ENCODE measurements at regions of chr19 and their contacts with region 1.

Region 1: GRCh38 chr19:13150187-13150930 is at the starts of genes IER2 and STX10:
- DNase-seq: peak; percentile 82 to 94
- ATAC-seq: peak; percentile 59 to 67
- H3K4me3 ChIP-seq: peak within 1 kb of the TSS; percentile 95
- H3K27ac ChIP-seq: peak within 1 kb of the TSS; percentile 99 to 100
- H3K4me1 ChIP-seq: peaks cover 8% of the 10 kb centered on the region; the same call in 1 of the 3 replicates
- CTCF ChIP-seq: peak; percentile 32
- EP300 ChIP-seq: no peak
- POLR2A ChIP-seq: peak; percentile 35
- RAD21 ChIP-seq: peak in 1 of 2 experiments; percentile 31; a peak in 2 of 5 replicates
- polyA plus RNA-seq, gene IER2: 52.5 and 75.7 TPM in 2 replicates
- polyA plus RNA-seq, gene STX10: 39.1 and 41.5 TPM in 2 replicates

Region 2: DNA sequence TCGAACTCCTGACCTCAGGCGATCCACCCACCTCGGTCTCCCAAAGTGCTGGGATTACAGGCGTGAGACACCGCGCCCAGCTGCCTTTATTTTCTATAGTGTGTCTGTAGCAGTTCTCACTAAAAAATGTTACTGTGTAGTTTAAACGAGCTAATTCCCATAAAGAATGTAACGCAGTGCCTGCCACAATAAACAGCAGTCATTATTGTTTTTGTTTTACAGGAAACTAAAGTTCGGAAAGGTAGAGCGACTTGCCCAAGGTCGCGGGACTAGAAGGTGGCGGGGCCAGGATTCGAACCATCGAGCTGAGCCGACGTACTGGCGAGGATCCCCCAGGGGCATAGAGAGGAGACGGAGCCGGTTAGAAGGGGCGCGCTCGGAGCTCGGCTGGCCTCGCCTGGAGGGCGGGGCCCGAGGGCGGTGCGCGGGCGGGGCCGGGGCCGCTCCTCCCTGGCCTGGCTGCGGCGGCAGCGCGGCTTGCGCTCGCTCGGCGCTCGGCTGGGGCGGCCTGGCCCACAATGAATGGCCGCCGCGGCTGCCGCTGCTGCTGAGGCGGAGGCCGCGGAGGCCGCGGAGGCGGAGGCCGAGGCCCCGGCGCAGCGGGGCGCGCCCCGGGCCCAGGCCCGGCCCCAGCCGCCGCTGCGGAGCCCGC is 32.5 kb before region 1 on chr19 and contains the start of gene NACC1:
- CTCF ChIA-PET with region 1: interaction called, 10 read pairs
- POLR2A ChIA-PET with region 1: interaction called, 12 read pairs
- DNase-seq: peak; percentile 86 to 87
- ATAC-seq: peak; percentile 88 to 90
- H3K4me3 ChIP-seq: peak within 1 kb of the TSS; percentile 100
- H3K27ac ChIP-seq: peak within 1 kb of the TSS; percentile 98 to 99
- H3K4me1 ChIP-seq: peaks cover 25% of the 10 kb centered on the region
- CTCF ChIP-seq: no peak
- EP300 ChIP-seq: no peak
- POLR2A ChIP-seq: no peak; the same call in 1 of the 2 replicates
- RAD21 ChIP-seq: no peak
- polyA plus RNA-seq, gene NACC1: 26.1 and 30.0 TPM in 2 replicates

Region 3: DNA sequence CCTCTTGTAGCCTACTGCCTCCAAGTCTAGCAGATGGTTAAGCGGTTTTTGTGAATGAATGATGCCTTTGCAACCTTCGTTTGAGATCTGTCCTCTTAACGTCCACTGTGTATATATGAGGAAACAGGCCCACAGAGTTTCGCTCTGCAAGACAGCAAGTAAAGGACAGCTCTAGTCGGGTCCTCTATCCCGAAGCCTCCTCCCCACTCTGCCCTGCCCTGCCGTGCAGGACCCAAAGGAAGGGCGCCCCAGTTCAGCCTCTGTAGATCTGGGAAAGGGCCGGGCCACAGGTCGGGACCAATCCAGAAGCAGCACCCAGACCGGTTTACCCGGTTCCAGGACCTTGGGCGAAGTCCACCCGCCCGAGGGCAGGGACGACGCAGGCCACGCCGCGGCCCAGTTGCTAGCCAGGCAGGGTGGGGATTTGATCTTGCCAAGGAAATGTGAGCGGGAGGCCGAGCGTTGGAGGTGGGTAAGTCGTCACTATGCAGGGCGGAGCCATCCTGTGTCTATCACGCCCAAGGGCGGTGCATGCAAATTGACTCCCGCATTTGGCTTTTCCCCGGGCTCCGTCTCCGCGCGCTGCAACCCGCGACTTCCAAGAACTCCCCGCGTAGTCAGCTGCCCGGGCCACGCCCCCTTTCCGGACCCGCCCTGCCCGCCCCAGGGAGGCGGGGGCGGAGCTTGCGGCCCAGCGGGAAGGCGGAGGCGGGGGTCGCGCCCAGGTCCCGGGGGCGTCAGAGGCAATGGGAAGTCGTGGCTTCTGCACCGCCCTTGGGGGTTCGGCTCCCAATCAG is 12.4 kb after region 1 on chr19:
- CTCF ChIA-PET with region 1: interaction called, 10 read pairs
- POLR2A ChIA-PET with region 1: interaction called, 72 read pairs
- DNase-seq: peak in 1 of 2 experiments; percentile 99
- ATAC-seq: peak; percentile 62 to 69
- H3K4me3 ChIP-seq: peak overlapping the region; percentile 42
- H3K27ac ChIP-seq: peak overlapping the region; percentile 100
- H3K4me1 ChIP-seq: peaks cover 58% of the 10 kb centered on the region
- CTCF ChIP-seq: no peak
- EP300 ChIP-seq: no peak
- POLR2A ChIP-seq: peak; percentile 55
- RAD21 ChIP-seq: no peak; a peak in 1 of 5 replicates

Region 4: DNA sequence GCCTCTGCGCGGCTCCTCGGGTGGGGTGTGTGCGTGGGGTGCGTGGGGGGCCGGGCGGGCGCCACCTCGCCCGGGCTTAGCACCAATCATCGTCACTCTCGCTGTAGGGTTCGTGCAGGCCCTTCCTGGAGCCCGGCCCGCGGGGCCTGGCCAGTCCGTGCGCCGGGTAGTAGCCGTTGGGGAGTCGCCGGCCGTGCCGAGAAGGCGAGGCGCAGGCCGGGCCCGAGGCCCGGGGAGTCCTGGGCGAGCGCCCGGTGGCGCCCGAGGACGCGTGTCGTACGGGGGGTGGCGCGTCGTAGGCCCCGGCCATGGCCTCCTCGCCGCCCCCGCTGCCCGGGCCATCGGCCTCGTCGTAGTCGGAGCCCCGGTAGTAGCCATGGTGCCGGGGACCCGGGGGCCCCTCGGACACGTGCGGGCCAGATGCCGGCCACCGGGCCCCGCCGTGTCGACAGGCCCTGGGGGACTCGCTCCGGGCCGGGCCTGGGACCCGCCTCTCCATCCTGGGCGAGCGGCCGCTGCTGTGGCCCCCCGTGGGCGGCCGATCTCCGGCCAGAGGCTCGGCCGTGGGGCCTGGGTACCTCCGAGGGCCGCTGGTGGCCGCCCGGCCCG is 57.0 kb after region 1 on chr19:
- CTCF ChIA-PET with region 1: no interaction called
- POLR2A ChIA-PET with region 1: no interaction called
- DNase-seq: no peak
- ATAC-seq: no peak
- H3K4me3 ChIP-seq: no peak overlapping the region
- H3K27ac ChIP-seq: no peak overlapping the region
- H3K4me1 ChIP-seq: no peaks in the 10 kb centered on the region
- CTCF ChIP-seq: no peak
- EP300 ChIP-seq: no peak
- POLR2A ChIP-seq: no peak
- RAD21 ChIP-seq: no peak

Region 5: DNA sequence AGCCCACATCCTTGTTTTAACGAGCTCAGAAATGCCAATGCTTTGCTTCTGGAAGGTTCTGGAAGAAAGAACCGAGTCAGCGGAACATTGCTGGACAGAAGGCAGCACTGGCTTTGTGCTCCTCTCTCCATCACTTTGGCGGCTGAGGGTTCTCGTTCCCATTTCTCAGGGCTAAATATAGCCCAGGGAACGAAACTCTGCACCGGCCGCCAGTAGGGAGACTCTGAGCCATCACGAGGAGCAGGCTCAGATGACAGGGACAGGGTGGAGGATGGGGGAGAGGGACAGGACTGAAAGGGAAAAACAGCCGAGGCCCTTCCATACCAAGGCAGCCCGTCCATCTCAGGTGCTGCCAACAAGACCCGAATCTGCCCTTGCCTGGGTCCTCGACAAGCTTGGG is 189.5 kb after region 1 on chr19:
- CTCF ChIA-PET with region 1: no interaction called
- POLR2A ChIA-PET with region 1: no interaction called
- DNase-seq: no peak
- ATAC-seq: no peak
- H3K4me3 ChIP-seq: no peak overlapping the region
- H3K27ac ChIP-seq: no peak overlapping the region
- H3K4me1 ChIP-seq: no peaks in the 10 kb centered on the region
- CTCF ChIP-seq: no peak
- EP300 ChIP-seq: no peak
- POLR2A ChIP-seq: no peak
- RAD21 ChIP-seq: no peak

Region 6: DNA sequence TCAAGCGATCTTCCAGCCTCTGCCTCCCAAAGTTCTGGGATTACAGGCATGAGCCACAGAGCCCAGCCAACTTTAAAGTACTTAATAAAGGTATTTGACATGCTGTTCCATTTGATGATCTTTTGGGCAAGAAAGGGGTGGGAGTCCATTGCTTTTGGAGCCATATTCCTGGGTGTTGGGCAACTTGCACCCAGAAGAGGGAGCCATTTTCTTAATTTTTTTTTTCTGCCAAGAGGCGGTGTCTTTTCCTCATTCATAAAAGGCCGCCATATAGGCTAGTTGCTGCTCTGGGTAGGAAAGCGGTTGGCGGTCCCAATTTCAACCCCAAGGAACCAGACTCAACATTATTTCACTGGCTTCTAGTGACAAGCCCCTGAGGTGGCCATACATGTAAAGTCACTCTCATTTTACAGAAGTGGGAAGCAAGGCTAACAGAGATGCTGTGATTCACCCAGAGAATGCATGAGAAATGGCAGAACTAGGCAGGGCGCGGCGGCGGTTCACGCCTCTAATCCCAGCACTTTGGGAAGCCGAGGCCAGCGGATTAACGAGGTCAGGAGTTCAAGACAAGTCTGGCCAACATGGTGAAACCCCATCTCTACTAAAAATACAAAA is 216.3 kb after region 1 on chr19:
- CTCF ChIA-PET with region 1: no interaction called
- POLR2A ChIA-PET with region 1: no interaction called
- DNase-seq: peak; percentile 20 to 34
- ATAC-seq: peak in 1 of 2 experiments; percentile 66; a peak in 2 of 6 replicates
- H3K4me3 ChIP-seq: no peak overlapping the region
- H3K27ac ChIP-seq: no peak overlapping the region
- H3K4me1 ChIP-seq: no peaks in the 10 kb centered on the region
- CTCF ChIP-seq: peak; percentile 40
- EP300 ChIP-seq: no peak
- POLR2A ChIP-seq: no peak
- RAD21 ChIP-seq: peak; percentile 53 to 63; a peak in 4 of 5 replicates

Measured in A549 (cell line).